ENCODE measurements at regions of chr17 and their contacts with region 1.

Region 1: DNA sequence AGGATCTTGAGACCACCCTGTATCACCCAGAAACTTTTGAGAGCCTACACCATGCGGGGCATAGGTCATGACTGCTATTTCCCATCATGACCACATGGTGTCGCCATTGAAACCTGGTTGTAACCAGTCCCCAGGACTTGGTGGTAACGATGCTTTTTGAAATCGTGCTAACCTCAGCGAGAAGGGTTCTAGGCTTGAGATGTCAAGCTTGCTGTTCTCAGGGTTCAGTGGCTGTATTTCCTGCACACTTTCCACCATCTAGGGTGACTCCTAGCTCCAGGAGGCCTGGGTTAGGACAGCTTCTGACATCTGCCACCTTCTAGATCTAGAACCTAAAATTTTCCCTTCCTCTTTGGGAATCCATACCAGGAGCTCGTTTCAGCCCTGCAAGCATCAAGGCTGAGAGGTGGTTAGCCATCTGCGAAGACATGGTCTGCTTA is 13.0 kb upstream of the SPNS3 start:
- DNase-seq: peak; percentile 74
- ATAC-seq: peak; percentile 99
- H3K4me3 ChIP-seq: no peak overlapping the region
- H3K27ac ChIP-seq: no peak overlapping the region
- H3K4me1 ChIP-seq: no peaks in the 10 kb centered on the region
- H3K27me3 ChIP-seq: 0 out of 2 replicates have a peak, but pooled peaks cover 3% of the 10 kb centered on the region
- CTCF ChIP-seq: peak; percentile 74
- POLR2A ChIP-seq: no peak
- RAD21 ChIP-seq: peak; percentile 84

Region 2: GRCh38 chr17:4536259-4536741 is 115.6 kb after region 1 on chr17:
- CTCF ChIA-PET with region 1: no interaction called
- POLR2A ChIA-PET with region 1: no interaction called
- dilution Hi-C with region 1: no loop called
- in situ Hi-C with region 1: no loop called
- intact Hi-C with region 1: loop called (anchors 5 kb)
- DNase-seq: no peak
- ATAC-seq: peak; percentile 27
- H3K4me3 ChIP-seq: no peak overlapping the region
- H3K27ac ChIP-seq: no peak overlapping the region
- H3K4me1 ChIP-seq: peaks cover 3% of the 10 kb centered on the region; the same call in 1 of the 2 replicates
- H3K27me3 ChIP-seq: peaks cover 6% of the 10 kb centered on the region; the same call in 1 of the 2 replicates
- CTCF ChIP-seq: no peak
- POLR2A ChIP-seq: no peak
- RAD21 ChIP-seq: no peak

Region 3: GRCh38 chr17:4554997-4555799 is 134.5 kb after region 1 on chr17 and contains the start of gene MYBBP1A:
- CTCF ChIA-PET with region 1: no interaction called
- POLR2A ChIA-PET with region 1: no interaction called
- dilution Hi-C with region 1: no loop called
- in situ Hi-C with region 1: no loop called
- intact Hi-C with region 1: loop called (anchors 5 kb)
- DNase-seq: peak; percentile 92
- ATAC-seq: peak; percentile 97
- H3K4me3 ChIP-seq: peak within 1 kb of the TSS; percentile 88
- H3K27ac ChIP-seq: peak within 1 kb of the TSS; percentile 87
- H3K4me1 ChIP-seq: peaks cover 8% of the 10 kb centered on the region
- H3K27me3 ChIP-seq: no peaks in the 10 kb centered on the region
- CTCF ChIP-seq: peak; percentile 23; the same call in 1 of the 2 replicates
- POLR2A ChIP-seq: peak; percentile 69
- RAD21 ChIP-seq: no peak
- total RNA-seq, gene MYBBP1A: 22.6 and 24.7 TPM in 2 replicates

Region 4: GRCh38 chr17:4565209-4566141 is 144.8 kb after region 1 on chr17:
- CTCF ChIA-PET with region 1: no interaction called
- POLR2A ChIA-PET with region 1: no interaction called
- dilution Hi-C with region 1: no loop called
- in situ Hi-C with region 1: no loop called
- intact Hi-C with region 1: no loop called
- DNase-seq: peak; percentile 75
- ATAC-seq: peak; percentile 90
- H3K4me3 ChIP-seq: no peak overlapping the region
- H3K27ac ChIP-seq: no peak overlapping the region
- H3K4me1 ChIP-seq: no peaks in the 10 kb centered on the region
- H3K27me3 ChIP-seq: peaks cover 13% of the 10 kb centered on the region
- CTCF ChIP-seq: peak; percentile 85
- POLR2A ChIP-seq: no peak
- RAD21 ChIP-seq: peak; percentile 62

Region 5: DNA sequence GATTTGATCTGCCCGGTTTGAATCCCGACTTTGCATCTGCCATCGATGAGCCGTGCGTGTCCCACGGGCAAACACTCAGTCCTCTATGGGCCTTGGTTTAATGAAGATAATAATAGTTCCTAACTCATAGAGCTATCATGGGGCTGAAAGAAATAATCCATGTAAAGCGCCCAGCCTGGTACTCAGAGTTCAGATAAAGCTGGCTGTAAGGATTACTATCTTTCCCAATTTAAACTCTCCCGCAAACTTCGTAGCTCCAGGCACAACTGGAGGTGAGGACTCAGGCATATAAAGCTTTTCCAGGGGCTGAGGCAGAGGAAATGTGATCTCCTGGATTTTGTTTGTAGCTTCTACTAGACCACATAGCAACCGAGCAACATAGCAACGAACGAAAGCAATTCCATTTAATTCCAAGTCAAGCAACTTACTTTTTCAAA is 204.5 kb after region 1 on chr17:
- CTCF ChIA-PET with region 1: no interaction called
- POLR2A ChIA-PET with region 1: no interaction called
- dilution Hi-C with region 1: no loop called
- in situ Hi-C with region 1: loop called (anchors 10 kb)
- intact Hi-C with region 1: loop called (anchors 1 kb)
- DNase-seq: peak; percentile 13
- ATAC-seq: no peak
- H3K4me3 ChIP-seq: no peak overlapping the region
- H3K27ac ChIP-seq: no peak overlapping the region
- H3K4me1 ChIP-seq: no peaks in the 10 kb centered on the region; the same call in 1 of the 2 replicates
- H3K27me3 ChIP-seq: peaks cover 15% of the 10 kb centered on the region
- CTCF ChIP-seq: no peak
- POLR2A ChIP-seq: no peak
- RAD21 ChIP-seq: no peak

Measured in IMR-90 (cell line).